ENCODE measurements at regions of chr10 and their contacts with region 1.

Region 1: DNA sequence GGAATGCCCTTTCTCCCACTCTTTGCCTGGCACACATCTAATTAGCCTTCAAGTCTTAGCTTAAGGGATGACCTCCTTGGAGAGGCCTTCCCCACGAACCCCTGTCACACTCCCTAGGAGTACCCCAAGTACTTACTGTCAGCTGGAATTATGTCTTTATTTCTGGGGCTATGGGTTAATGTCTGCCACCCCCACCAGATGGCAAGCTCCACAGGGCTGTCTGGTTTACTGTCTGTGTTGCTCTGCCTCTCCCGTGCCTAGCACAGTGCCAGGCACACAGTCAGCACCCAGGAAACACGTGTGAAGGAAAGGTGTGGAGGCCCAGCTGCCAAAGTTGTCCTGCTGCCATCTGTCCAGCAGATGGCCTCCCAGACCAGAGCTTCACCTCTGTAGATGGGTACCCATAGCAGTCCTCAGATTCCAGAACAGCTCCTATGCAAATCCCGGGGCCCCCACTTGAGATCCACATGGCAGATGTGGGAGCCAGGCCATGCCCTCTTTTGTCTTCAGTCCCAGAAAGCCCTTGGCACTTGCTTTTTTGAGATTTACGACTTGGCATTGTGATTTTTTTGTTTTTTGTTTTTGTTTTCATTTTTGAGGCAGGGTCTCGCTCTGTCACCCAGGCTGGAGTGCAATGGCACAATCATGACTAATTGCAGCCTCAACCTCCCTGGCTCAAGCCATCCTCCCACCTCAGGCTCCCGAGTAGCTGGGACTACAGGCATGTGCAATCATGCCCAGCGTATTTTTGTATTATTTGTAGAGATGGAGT is 17.2 kb upstream of the PALD1 start:
- DNase-seq: peak; percentile 52 to 56
- ATAC-seq: peak; percentile 42 to 73 (median 54)
- H3K4me3 ChIP-seq: no peak overlapping the region
- H3K27ac ChIP-seq: peak overlapping the region in 1 of 10 donors; percentile 7
- H3K4me1 ChIP-seq: peaks cover 16 to 56% (median 37%) of the 10 kb centered on the region in 9 donors
- H3K27me3 ChIP-seq: peaks cover 0 to 34% (median 0%) of the 10 kb centered on the region in 7 donors
- CTCF ChIP-seq: peak; percentile 82 to 95 (median 88)

Region 2: DNA sequence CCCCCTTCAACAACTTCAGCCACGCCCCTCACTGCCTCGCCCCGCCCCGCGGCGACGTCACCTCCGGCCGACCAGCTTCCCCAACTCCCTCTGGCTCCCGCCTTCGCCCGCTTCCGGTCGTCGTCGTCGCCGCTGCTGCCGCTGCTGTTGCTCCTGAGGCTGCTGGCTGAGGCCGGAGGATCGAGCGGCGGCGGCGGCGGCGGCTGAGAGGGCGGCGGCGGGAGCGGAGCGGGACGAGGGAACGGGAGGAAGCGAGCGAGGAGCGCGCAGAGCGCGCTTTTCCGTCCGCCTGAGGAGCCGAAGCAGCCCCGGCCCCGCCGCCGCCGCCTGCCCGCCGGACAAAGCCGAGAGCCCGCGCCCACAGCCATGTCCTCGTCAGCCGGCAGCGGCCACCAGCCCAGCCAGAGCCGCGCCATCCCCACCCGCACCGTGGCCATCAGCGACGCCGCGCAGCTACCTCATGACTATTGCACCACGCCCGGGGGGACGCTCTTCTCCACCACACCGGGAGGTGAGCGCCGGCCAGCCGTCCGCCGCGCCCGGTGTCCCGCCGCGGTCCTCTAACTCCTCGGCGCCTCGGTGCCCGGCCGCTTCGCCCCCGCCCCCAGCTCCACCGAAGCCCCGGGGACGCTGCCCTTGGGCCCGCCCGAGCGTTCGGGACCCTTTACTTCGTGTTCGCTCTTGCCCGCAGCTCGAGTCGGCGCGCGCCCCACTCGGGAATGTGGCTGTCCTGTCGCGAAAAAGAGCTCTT is 57.2 kb before region 1 on chr10 and contains the start of gene EIF4EBP2:
- intact Hi-C with region 1: loop called in 1 of 10 experiments (anchors 2 kb)
- DNase-seq: peak; percentile 99
- ATAC-seq: peak; percentile 94 to 97 (median 96)
- H3K4me3 ChIP-seq: peak within 1 kb of the TSS; percentile 68 to 99 (median 93)
- H3K27ac ChIP-seq: peak within 1 kb of the TSS; percentile 89 to 100 (median 98)
- H3K4me1 ChIP-seq: peaks cover 9 to 43% (median 38%) of the 10 kb centered on the region in 9 donors
- H3K27me3 ChIP-seq: no peaks in the 10 kb centered on the region
- CTCF ChIP-seq: no peak
- total RNA-seq, gene EIF4EBP2: 70.1 to 128 (median 81.9) TPM

Region 3: DNA sequence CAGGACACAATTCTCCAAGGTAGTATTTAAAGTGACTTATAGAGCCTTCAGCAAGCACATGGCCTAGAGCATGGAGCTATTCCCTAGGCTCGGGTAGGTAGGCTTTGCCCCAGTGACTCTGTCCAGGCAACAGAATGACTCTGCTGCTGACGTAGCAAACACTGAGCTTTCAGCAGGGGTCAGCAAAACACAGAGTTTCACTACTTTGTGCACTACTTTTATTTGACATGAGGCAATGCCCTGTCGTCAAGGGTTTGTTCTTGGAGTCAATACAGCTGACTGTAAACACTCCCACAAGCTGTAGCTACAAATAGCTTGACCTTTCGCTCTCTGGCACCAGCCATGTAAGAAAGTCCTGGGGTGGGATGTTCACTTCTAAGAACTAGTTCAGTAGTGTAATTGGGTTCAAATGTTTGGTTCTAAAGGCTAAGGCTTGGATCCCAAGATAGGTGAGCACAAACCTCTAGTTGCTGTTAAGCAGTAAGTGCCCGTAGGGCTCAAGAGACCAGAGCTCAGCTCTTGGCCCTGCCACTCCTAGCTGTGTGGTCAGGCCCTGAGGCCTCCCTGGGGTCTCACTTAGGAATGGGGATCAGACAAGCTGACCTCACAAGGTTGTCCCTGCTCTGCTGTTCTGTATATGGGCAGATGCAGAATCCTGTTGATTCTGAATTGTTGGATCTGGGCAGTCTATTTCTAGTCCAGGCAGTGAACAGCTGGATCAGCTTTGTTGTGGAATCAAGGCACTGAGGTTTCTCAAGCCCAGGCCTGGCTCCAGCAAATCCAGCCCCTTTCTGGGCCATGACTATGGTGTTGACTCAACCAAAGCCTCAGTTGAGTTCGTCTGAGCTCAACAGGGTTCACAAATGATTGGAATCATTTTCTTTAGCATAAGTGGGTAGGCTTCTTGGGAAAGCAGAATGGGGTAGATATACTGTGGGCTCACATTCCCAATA is 30.6 kb before region 1 on chr10:
- intact Hi-C with region 1: loop called in 1 of 10 experiments (anchors 2 kb)
- DNase-seq: peak; percentile 34 to 89
- ATAC-seq: peak; percentile 77 to 91 (median 85)
- H3K4me3 ChIP-seq: no peak overlapping the region
- H3K27ac ChIP-seq: peak overlapping the region; percentile 64 to 89 (median 79)
- H3K4me1 ChIP-seq: peaks cover 12 to 58% (median 49%) of the 10 kb centered on the region in 9 donors
- H3K27me3 ChIP-seq: no peaks in the 10 kb centered on the region
- CTCF ChIP-seq: peak in 7 of 9 donors; percentile 8 to 69 (median 45)

Region 4: DNA sequence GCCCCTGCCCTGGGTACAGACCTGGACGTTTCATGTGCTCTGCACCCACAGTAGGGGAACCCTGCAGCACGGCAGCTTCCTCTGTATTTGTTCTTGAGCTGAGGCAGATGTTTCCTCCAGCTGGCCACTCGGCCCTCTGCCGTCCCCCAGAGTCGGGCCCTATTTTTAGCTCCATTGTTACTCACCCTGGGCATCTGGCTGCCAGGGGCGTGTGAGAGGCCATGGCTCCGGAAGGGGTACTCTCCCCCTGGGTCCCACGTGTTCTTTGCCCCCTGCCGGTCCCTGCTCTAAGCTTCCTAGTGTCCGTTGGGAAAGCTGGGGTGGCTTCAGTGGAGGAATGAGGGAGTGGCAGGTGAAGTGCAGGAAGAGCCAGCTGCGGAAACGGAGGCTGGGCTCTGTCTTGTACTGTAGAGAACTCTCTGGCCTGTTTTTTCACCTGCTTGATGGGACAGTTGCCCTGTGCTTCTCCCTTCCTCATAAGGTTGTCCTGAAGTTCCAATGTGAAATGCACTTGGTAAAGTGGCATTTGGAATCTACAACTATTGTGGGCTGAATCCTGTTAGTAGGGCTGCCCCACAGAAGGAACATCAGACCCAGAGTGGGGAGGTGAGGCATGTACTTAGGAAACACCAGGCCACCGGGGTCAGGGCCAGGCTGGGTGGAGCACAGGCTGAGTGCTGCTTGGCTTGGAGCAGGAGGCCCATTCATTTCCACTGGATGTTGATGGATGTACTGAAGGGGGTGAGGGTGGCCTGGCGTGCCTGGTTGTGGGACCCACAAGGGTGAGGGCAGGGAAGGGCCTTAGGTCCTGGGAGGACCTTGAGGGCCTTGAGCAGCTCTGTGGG is 47.7 kb after region 1 on chr10:
- intact Hi-C with region 1: loop called in 2 of 10 experiments (anchors 5 kb)
- DNase-seq: peak; percentile 64 to 76
- ATAC-seq: peak; percentile 70 to 87 (median 86)
- H3K4me3 ChIP-seq: peak overlapping the region in 2 of 10 donors; percentile 16 to 24
- H3K27ac ChIP-seq: peak overlapping the region in 9 of 10 donors; percentile 54 to 87 (median 73)
- H3K4me1 ChIP-seq: peaks cover 29 to 81% (median 58%) of the 10 kb centered on the region in 9 donors
- H3K27me3 ChIP-seq: no peaks in the 10 kb centered on the region
- CTCF ChIP-seq: peak in 4 of 9 donors; percentile 6 to 17 (median 8)

Region 5: GRCh38 chr10:70540089-70540788 is 78.8 kb after region 1 on chr10:
- intact Hi-C with region 1: loop called (anchors 1 to 5 kb)
- DNase-seq: peak; percentile 32 to 48
- ATAC-seq: peak; percentile 46 to 62 (median 56)
- H3K4me3 ChIP-seq: no peak overlapping the region
- H3K27ac ChIP-seq: no peak overlapping the region
- H3K4me1 ChIP-seq: no peaks in the 10 kb centered on the region
- H3K27me3 ChIP-seq: no peaks in the 10 kb centered on the region
- CTCF ChIP-seq: peak; percentile 52 to 81 (median 72)